ENCODE measurements at regions of chr4 and their contacts with region 1.

Region 1: GRCh38 chr4:158850800-158851644 is 82.2 kb downstream of the FNIP2 start:
- DNase-seq: peak; percentile 35
- H3K4me3 Mint-ChIP-seq: no peak overlapping the region
- H3K27ac Mint-ChIP-seq: no peak overlapping the region
- H3K4me1 Mint-ChIP-seq: no peaks in the 10 kb centered on the region
- H3K27me3 Mint-ChIP-seq: no peaks in the 10 kb centered on the region
- CTCF ChIP-seq: peak; percentile 58

Region 2: GRCh38 chr4:158253350-158253980 is 597.6 kb before region 1 on chr4:
- CTCF ChIA-PET with region 1: interaction called, 6 read pairs
- POLR2A ChIA-PET with region 1: no interaction called
- intact Hi-C with region 1: loop called (anchors 1 kb)
- DNase-seq: peak; percentile 72
- H3K4me3 Mint-ChIP-seq: no peak overlapping the region
- H3K27ac Mint-ChIP-seq: no peak overlapping the region
- H3K4me1 Mint-ChIP-seq: no peaks in the 10 kb centered on the region
- H3K27me3 Mint-ChIP-seq: no peaks in the 10 kb centered on the region
- CTCF ChIP-seq: peak; percentile 62

Region 3: GRCh38 chr4:158722917-158723793 is 127.9 kb before region 1 on chr4 and contains the start of gene PPID:
- CTCF ChIA-PET with region 1: interaction called, 23 read pairs
- POLR2A ChIA-PET with region 1: interaction called, 7 read pairs
- intact Hi-C with region 1: loop called (anchors 2 kb)
- DNase-seq: peak; percentile 82
- H3K4me3 Mint-ChIP-seq: peak within 1 kb of the TSS; percentile 100
- H3K27ac Mint-ChIP-seq: peak within 1 kb of the TSS; percentile 97
- H3K4me1 Mint-ChIP-seq: peaks cover 7% of the 10 kb centered on the region
- H3K27me3 Mint-ChIP-seq: peaks cover 17% of the 10 kb centered on the region
- CTCF ChIP-seq: no peak
- total RNA-seq, gene PPID: 29.2 and 36.6 TPM in 2 replicates

Region 4: DNA sequence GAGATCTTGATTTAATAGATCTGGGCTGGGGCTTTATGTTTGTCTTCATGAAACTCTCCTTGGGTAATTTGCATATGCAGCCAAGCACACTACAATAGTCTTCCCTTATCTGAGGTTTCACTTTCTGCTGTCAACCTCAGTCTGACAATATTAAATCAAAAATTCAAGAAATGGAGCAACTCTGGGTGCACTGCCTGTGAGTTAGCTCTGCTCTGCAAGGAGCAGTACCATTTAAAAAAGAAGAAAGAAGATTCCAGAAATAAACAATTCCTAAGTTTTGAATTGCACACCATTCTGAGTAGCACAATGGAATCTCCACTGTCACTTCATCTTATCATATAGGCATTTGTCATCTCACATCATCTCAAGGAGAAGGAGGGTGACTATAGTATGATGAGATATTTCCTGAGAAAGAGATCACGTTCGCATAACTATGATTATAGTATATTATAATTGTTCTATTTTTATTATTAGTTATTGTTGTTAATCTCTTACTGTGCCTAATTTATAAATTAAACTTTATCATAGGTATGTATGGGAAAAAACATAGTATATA is 72.8 kb before region 1 on chr4:
- CTCF ChIA-PET with region 1: interaction called, 11 read pairs
- POLR2A ChIA-PET with region 1: interaction called, 4 read pairs
- intact Hi-C with region 1: no loop called
- DNase-seq: no peak
- H3K4me3 Mint-ChIP-seq: no peak overlapping the region
- H3K27ac Mint-ChIP-seq: no peak overlapping the region
- H3K4me1 Mint-ChIP-seq: peaks cover 20% of the 10 kb centered on the region
- H3K27me3 Mint-ChIP-seq: no peaks in the 10 kb centered on the region
- CTCF ChIP-seq: no peak

Region 5: DNA sequence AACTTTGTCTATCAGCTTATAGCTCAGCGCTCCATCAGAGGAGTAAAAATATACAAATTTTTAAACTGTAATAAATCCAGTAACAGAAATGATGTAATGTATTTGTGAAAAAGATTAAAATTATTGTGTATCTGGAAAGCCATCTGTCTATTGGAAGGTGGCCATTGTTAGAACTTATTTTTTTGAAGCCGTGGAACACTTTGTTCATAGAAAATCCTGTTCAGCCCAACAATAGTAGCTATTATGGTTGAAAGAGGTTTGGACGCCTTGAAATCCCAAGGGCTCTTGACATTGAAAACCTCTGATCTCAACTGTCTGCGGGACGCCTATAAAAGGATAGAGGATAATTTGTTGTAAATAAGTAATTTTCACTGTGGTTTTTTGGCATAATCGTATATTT is 350.1 kb after region 1 on chr4:
- CTCF ChIA-PET with region 1: interaction called, 57 read pairs
- POLR2A ChIA-PET with region 1: no interaction called
- intact Hi-C with region 1: no loop called
- DNase-seq: no peak
- H3K4me3 Mint-ChIP-seq: no peak overlapping the region
- H3K27ac Mint-ChIP-seq: no peak overlapping the region
- H3K4me1 Mint-ChIP-seq: peaks cover 11% of the 10 kb centered on the region
- H3K27me3 Mint-ChIP-seq: no peaks in the 10 kb centered on the region
- CTCF ChIP-seq: no peak